Astrocyte of the cerebellum (primary cell): ENCODE measurements at regions of chr17 and their contacts with region 1.

Region 1: GRCh38 chr17:81394921-81395599 is at the start of gene BAHCC1:
- DNase-seq: peak; percentile 100
- H3K4me3 ChIP-seq: peak within 1 kb of the TSS; percentile 72
- CTCF ChIP-seq: no peak

Region 2: DNA sequence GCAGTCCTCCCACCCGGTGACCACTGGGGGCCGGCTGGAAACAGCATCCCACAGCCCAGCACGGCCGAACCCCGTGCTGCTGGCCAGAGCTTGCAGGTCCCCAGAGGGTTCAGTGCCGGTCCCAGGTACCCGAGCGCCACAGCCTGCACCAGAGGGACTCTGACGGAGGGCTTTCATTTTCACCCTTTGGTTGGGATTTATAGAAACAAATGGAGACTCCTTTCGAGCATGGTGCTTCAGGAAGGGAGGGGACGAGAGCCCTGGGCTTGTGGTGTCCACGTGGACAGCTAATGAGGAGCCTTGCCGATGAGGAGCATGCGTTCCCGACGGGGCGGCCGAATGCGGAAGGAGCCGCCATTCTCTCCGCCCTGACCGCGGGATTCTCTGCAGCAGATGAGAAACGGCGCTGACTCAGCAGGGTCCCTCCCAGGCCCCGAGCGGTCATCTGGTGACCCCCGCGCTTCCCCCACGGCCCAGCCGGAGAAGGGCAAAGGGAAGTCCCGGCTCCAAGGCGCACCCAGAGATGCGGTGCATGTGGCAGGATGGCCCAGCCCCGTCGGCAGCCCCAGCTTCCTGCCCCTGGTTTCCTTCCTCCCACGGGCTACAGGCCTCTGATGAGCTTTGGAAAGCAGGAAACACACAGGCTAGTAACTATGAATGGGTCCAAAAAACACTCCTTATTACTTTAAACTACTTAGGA is 109.7 kb before region 1 on chr17:
- in situ Hi-C with region 1: loop called (anchors 10 kb)
- DNase-seq: no peak
- H3K4me3 ChIP-seq: no peak overlapping the region
- CTCF ChIP-seq: no peak

Region 3: GRCh38 chr17:81445642-81446503 is 50.8 kb after region 1 on chr17:
- in situ Hi-C with region 1: no loop called
- DNase-seq: no peak
- H3K4me3 ChIP-seq: no peak overlapping the region
- CTCF ChIP-seq: no peak

Region 4: GRCh38 chr17:81456798-81457197 is 61.7 kb after region 1 on chr17:
- in situ Hi-C with region 1: loop called (anchors 5 kb)
- DNase-seq: no peak
- H3K4me3 ChIP-seq: no peak overlapping the region
- CTCF ChIP-seq: no peak

Region 5: DNA sequence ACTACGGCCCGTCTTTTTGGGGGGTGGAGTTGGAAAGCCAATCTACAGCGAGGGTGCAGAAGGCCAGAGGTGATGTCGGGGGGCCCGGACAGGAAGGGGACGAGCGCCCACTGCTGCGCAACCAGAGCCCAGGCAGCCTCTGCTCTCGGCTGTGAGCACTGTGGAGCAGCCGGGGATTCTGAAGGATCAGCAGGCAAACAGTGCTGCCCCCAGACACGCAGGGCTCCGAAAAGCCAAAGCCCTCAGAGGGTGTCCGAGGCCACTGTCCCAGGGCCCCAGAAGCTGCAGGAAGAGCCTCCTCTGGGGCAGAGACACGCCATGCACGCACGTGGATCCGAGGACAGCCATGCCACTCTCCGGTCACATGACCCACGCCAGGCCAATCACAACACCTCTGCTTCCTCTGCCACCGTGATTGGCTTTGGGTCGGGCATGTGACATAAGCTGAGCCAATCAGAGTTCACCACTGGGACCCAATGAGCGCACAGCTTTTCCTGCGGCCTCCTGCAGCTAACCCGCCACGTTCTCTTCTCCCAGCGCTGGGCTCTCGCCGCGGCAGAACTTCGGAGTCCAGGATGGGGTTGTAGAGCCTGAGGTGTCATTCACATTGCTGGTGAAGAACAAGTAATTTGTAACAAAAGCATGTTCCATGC is 76.9 kb after region 1 on chr17:
- in situ Hi-C with region 1: no loop called
- DNase-seq: peak; percentile 4
- H3K4me3 ChIP-seq: no peak overlapping the region
- CTCF ChIP-seq: no peak